Caco-2 (cell line): ENCODE measurements at regions of chr3 and their contacts with region 1.

Region 1: GRCh38 chr3:112582244-112582874 is 20.5 kb downstream of the SLC35A5 start:
- DNase-seq: peak in 1 of 2 experiments; percentile 49
- H3K4me3 ChIP-seq: no peak overlapping the region
- H3K4me3 Mint-ChIP-seq: no peak overlapping the region
- H3K27ac Mint-ChIP-seq: no peak overlapping the region
- H3K4me1 ChIP-seq: no peaks in the 10 kb centered on the region
- H3K4me1 Mint-ChIP-seq: no peaks in the 10 kb centered on the region
- H3K27me3 ChIP-seq: no peaks in the 10 kb centered on the region
- H3K27me3 Mint-ChIP-seq: no peaks in the 10 kb centered on the region
- CTCF ChIP-seq: peak; percentile 51 to 62

Region 2: DNA sequence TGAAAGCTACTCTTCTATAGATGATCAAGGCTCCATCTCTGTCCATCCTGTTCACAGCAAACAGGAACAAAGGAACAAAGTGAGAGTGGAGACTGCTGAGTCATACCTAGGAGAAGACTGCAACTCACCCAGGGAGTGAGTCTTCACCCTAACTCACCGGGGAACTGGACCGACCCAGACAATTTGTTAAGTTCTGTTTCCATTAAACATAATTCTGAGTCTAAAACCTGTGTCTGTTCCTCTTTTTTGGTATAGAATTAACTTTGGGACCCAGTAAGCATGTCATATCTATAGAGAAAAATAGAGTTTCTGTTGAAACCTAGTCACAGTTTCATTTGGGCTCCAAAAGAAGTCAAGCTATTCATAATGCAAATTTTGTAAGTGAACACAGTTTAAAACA is 36.9 kb after region 1 on chr3:
- CTCF ChIA-PET with region 1: no interaction called
- POLR2A ChIA-PET with region 1: no interaction called
- intact Hi-C with region 1: no loop called
- DNase-seq: no peak
- H3K4me3 ChIP-seq: no peak overlapping the region
- H3K4me3 Mint-ChIP-seq: no peak overlapping the region
- H3K27ac Mint-ChIP-seq: no peak overlapping the region
- H3K4me1 ChIP-seq: peaks cover 15% of the 10 kb centered on the region
- H3K4me1 Mint-ChIP-seq: peaks cover 12% of the 10 kb centered on the region
- H3K27me3 ChIP-seq: no peaks in the 10 kb centered on the region
- H3K27me3 Mint-ChIP-seq: no peaks in the 10 kb centered on the region
- CTCF ChIP-seq: no peak

Region 3: DNA sequence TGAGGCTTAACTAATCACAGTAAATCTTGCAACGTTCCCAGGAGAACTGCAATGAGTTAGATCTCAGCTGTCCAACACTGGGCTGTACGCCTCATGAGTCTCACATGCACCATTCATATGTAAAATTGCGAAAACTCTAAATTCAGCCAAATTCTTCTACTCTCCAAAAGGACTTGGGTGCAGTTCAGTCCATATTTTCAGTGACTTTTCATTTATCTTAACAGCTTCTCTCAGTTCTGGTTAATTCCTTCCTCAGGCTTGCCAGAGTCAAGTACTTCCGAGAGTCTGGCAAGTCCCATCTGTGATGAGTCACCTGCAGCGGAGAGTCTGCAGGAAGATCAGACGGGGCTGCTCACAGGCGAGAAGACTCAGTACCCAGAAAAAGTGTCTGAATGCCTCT is 47.1 kb after region 1 on chr3:
- CTCF ChIA-PET with region 1: no interaction called
- POLR2A ChIA-PET with region 1: no interaction called
- intact Hi-C with region 1: loop called (anchors 5 kb)
- DNase-seq: no peak
- H3K4me3 ChIP-seq: no peak overlapping the region
- H3K4me3 Mint-ChIP-seq: no peak overlapping the region
- H3K27ac Mint-ChIP-seq: no peak overlapping the region
- H3K4me1 ChIP-seq: peaks cover 32% of the 10 kb centered on the region
- H3K4me1 Mint-ChIP-seq: peaks cover 19% of the 10 kb centered on the region
- H3K27me3 ChIP-seq: no peaks in the 10 kb centered on the region
- H3K27me3 Mint-ChIP-seq: no peaks in the 10 kb centered on the region
- CTCF ChIP-seq: no peak

Region 4: DNA sequence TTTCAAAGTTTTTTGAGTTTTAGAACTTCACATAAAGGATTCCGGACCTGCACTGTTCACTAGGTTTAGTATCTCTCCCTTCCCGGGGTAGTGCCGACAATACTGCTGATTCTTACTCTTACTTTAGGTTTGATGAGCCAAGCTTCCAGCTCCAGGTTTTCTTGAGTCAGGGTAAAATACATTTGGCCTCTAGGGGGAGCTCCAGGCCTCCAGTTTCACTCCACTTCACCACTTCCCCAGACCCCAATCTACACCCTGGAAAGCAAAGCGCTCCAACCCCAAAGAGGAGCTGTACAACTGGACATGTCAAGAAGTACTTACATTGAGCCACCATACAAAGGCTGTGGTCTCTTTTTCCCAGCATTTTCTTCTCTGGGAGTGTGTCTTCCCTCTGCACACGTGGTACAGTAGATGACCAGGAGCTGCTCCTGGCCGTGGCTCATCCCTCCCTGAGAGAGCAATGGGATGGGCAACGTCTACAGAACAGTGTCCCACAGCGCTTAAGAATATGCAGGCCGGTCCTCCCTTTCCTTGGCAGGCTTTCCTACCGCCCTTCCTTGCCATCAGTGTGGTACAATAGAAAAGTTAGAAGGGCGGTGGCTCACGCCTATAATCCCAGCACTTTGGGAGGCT is 152.5 kb after region 1 on chr3:
- CTCF ChIA-PET with region 1: interaction called, 5 read pairs
- POLR2A ChIA-PET with region 1: no interaction called
- intact Hi-C with region 1: loop called (anchors 2 kb)
- DNase-seq: peak; percentile 67 to 76
- H3K4me3 ChIP-seq: no peak overlapping the region
- H3K4me3 Mint-ChIP-seq: no peak overlapping the region
- H3K27ac Mint-ChIP-seq: no peak overlapping the region
- H3K4me1 ChIP-seq: peaks cover 19% of the 10 kb centered on the region
- H3K4me1 Mint-ChIP-seq: peaks cover 18% of the 10 kb centered on the region
- H3K27me3 ChIP-seq: no peaks in the 10 kb centered on the region
- H3K27me3 Mint-ChIP-seq: no peaks in the 10 kb centered on the region
- CTCF ChIP-seq: peak; percentile 63 to 81

Region 5: DNA sequence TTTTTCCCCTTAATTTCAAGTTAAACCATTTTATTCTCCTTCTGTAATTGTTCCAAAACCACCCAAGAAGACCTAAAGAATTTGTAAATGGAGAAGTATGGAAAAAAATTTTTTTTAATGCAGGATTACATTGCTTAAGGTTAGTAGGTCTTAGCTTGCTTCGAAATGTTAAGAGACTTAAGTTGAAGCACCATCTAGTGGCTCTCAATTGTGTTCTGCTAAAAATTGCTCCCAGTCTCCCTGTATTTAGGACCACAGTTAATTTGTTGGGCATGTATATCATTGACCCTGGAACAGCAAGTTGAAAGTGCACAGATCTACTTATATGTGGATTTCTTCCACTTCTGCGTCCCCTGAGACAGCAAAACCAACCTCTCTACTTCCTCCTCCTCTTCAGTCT is 231.9 kb after region 1 on chr3:
- CTCF ChIA-PET with region 1: interaction called, 5 read pairs
- POLR2A ChIA-PET with region 1: no interaction called
- intact Hi-C with region 1: loop called (anchors 2 kb)
- DNase-seq: peak in 1 of 2 experiments; percentile 12
- H3K4me3 ChIP-seq: no peak overlapping the region
- H3K4me3 Mint-ChIP-seq: no peak overlapping the region
- H3K27ac Mint-ChIP-seq: no peak overlapping the region
- H3K4me1 ChIP-seq: no peaks in the 10 kb centered on the region
- H3K4me1 Mint-ChIP-seq: no peaks in the 10 kb centered on the region
- H3K27me3 ChIP-seq: no peaks in the 10 kb centered on the region
- H3K27me3 Mint-ChIP-seq: no peaks in the 10 kb centered on the region
- CTCF ChIP-seq: peak; percentile 28 to 48

Region 6: GRCh38 chr3:112908252-112908651 is 325.9 kb after region 1 on chr3:
- CTCF ChIA-PET with region 1: no interaction called
- POLR2A ChIA-PET with region 1: no interaction called
- intact Hi-C with region 1: no loop called
- DNase-seq: no peak
- H3K4me3 ChIP-seq: no peak overlapping the region
- H3K4me3 Mint-ChIP-seq: no peak overlapping the region
- H3K27ac Mint-ChIP-seq: no peak overlapping the region
- H3K4me1 ChIP-seq: no peaks in the 10 kb centered on the region
- H3K4me1 Mint-ChIP-seq: no peaks in the 10 kb centered on the region
- H3K27me3 ChIP-seq: no peaks in the 10 kb centered on the region
- H3K27me3 Mint-ChIP-seq: no peaks in the 10 kb centered on the region
- CTCF ChIP-seq: no peak

Region 7: GRCh38 chr3:112979240-112979832 is 397.0 kb after region 1 on chr3:
- CTCF ChIA-PET with region 1: no interaction called
- POLR2A ChIA-PET with region 1: no interaction called
- intact Hi-C with region 1: loop called (anchors 1 kb)
- DNase-seq: peak in 1 of 2 experiments; percentile 39
- H3K4me3 ChIP-seq: no peak overlapping the region
- H3K4me3 Mint-ChIP-seq: no peak overlapping the region
- H3K27ac Mint-ChIP-seq: no peak overlapping the region
- H3K4me1 ChIP-seq: no peaks in the 10 kb centered on the region
- H3K4me1 Mint-ChIP-seq: peaks cover 6% of the 10 kb centered on the region
- H3K27me3 ChIP-seq: no peaks in the 10 kb centered on the region
- H3K27me3 Mint-ChIP-seq: no peaks in the 10 kb centered on the region
- CTCF ChIP-seq: peak; percentile 55 to 76